ENCODE measurements at regions of chr12 and their contacts with region 1.

Region 1: DNA sequence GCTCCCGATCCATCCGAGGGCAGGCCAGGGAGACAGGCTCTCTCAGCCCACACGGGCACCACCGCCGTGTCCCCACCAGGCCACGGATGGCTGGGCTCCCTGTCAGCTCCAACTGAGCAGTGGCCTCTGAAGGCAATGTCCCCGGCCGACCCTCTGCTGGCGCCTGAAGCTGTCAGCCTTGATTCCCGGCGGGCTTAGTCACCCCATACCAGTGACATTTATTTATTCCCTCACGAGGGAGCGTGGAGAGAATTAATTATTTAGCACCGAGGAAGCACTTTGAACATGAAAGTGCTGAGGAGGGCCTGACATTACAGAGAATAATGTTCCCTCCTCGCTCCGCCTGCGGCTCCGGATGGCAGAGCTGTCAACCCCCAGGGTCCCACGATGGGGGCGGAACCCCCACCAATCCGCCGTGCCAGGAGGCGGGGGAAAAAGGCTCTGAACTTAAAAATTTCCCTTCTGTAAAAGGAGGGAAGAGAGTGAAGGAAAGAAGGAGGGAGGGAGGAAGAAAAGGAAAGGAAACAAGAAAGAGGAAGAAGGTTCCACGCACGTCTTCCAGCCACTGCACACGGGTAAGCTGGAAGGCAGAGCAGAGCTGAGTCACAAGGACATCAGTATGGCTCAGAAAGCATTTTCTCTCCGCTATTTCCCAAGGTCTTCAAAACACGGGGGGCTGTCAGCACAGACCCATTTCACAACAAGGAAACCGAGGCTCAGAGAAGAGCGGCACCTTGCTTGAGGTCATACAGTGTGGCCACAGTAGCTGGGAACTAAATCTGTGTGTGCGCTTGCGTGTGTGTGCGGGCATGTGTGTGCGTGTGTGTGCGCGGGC is 108.7 kb upstream of the NCOR2 start:
- DNase-seq: peak in 1 of 2 donors; percentile 51
- ATAC-seq: peak; percentile 29 to 83 (median 39)
- H3K4me3 ChIP-seq: no peak overlapping the region
- H3K27ac ChIP-seq: peak overlapping the region in 9 of 10 donors; percentile 26 to 80 (median 58)
- H3K4me1 ChIP-seq: peaks cover 9 to 42% (median 31%) of the 10 kb centered on the region in 9 donors
- H3K27me3 ChIP-seq: no peaks in the 10 kb centered on the region
- CTCF ChIP-seq: no peak

Region 2: GRCh38 chr12:124578445-124578844 is 97.7 kb before region 1 on chr12:
- intact Hi-C with region 1: loop called in 1 of 10 experiments (anchors 10 kb)
- DNase-seq: no peak
- ATAC-seq: no peak
- H3K4me3 ChIP-seq: no peak overlapping the region
- H3K27ac ChIP-seq: no peak overlapping the region
- H3K4me1 ChIP-seq: peaks cover 3 to 17% (median 10%) of the 10 kb centered on the region in 9 donors
- H3K27me3 ChIP-seq: no peaks in the 10 kb centered on the region
- CTCF ChIP-seq: no peak

Region 3: GRCh38 chr12:124625867-124626675 is 50.0 kb before region 1 on chr12:
- intact Hi-C with region 1: no loop called
- DNase-seq: peak; percentile 91
- ATAC-seq: peak; percentile 84 to 97 (median 92)
- H3K4me3 ChIP-seq: peak overlapping the region in 1 of 10 donors; percentile 24
- H3K27ac ChIP-seq: peak overlapping the region; percentile 65 to 95 (median 83)
- H3K4me1 ChIP-seq: peaks cover 13 to 64% (median 41%) of the 10 kb centered on the region in 9 donors
- H3K27me3 ChIP-seq: no peaks in the 10 kb centered on the region
- CTCF ChIP-seq: no peak